ENCODE measurements at regions of chr20 and their contacts with region 1.

Region 1: GRCh38 chr20:33915726-33916331 is 77.9 kb upstream of the RALY start:
- DNase-seq: peak; percentile 21 to 43 (median 23)
- H3K4me3 ChIP-seq: no peak overlapping the region
- H3K27ac ChIP-seq: no peak overlapping the region
- H3K4me1 ChIP-seq: peaks cover 0 to 4% (median 0%) of the 10 kb centered on the region in 4 experiments
- H3K27me3 ChIP-seq: peaks cover 0 to 4% (median 0%) of the 10 kb centered on the region in 5 experiments

Region 2: GRCh38 chr20:33925867-33926266 is 10.0 kb after region 1 on chr20:
- CTCF ChIA-PET with region 1: interaction called, 14 read pairs
- POLR2A ChIA-PET with region 1: no interaction called
- DNase-seq: no peak
- H3K4me3 ChIP-seq: no peak overlapping the region
- H3K27ac ChIP-seq: no peak overlapping the region
- H3K4me1 ChIP-seq: no peaks in the 10 kb centered on the region
- H3K27me3 ChIP-seq: peaks cover 0 to 6% (median 0%) of the 10 kb centered on the region in 5 experiments

Measured in common myeloid progenitor, CD34-positive (primary cell).